ENCODE measurements at regions of chr11 and their contacts with region 1.

Region 1: DNA sequence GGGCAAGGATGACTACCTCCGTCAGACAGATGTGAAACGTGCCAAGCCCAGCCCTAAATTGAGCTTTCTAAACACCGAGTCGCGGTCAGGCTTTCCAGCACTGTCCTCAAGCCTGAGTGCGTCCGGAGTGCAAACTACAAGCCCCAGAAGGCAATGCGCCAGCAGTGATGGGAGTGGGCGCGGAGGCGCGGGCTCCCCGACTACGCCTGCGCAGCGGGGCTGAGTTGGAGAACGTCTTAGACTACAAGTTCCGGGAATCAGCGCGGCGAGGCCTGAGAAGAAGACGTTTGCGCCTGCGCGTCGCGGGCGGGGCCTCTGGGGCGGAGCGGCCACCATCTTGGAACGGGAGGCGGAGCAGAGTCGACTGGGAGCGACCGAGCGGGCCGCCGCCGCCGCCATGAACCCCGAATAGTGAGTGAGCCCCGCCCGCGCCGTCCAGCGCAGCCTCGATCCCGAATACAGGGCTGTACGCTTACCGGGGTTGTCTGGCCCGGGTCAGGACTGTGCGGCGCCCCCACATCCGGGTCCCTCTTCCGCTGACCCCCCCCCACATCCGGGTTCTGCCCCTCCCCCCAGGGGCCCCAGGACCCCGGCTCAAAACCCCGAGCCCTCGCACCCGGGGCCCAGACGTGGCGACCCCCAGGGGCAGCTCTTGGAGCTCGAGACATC is at the start of gene RAB1B:
- DNase-seq: peak; percentile 99
- ATAC-seq: peak; percentile 88
- H3K4me3 Mint-ChIP-seq: peak within 1 kb of the TSS; percentile 87
- H3K27ac Mint-ChIP-seq: peak within 1 kb of the TSS; percentile 95
- H3K4me1 Mint-ChIP-seq: peaks cover 39% of the 10 kb centered on the region
- H3K27me3 Mint-ChIP-seq: no peaks in the 10 kb centered on the region
- total RNA-seq, gene RAB1B: 136 to 145 TPM

Region 2: DNA sequence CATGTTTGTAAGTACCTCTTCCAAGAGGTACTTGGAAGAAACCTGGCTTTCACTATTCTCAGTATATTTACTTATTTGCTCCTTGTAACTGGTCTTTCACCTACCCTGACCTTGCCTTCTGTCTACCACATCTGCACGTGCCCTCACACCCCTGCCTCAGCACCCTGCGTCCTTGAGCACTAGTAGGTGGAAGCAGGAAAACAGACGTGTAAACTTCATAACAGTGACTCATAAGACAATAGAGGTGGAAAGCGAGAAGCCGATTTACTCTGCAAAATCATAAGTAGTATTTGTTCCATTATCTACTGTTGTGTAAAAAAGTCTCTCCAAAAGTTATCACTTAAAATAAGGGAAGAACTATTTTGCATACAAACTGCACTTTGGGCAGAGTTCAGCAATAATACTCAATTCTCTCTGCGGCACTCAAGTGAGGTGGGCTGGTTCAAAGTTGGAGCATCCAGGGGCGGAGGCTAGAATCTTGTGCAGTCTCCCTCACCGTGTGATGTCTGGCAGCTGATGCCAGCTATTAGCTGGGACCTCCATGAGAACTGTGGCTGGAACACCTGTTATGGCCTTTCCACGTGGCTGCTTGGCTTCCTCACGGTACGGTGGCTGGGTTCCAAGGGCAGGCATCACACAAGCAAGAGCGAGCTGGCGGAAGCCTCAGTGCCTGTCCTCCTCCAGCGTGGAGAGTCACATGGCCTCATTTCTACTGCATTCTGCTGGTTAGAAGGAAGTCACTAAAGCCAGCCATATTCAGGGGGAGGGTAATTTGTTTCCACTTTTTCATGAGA is 167.9 kb before region 1 on chr11:
- POLR2A ChIA-PET with region 1: no interaction called
- DNase-seq: peak; percentile 71
- ATAC-seq: peak; percentile 97
- H3K4me3 Mint-ChIP-seq: peak overlapping the region; percentile 76
- H3K27ac Mint-ChIP-seq: peak overlapping the region; percentile 86
- H3K4me1 Mint-ChIP-seq: peaks cover 41% of the 10 kb centered on the region
- H3K27me3 Mint-ChIP-seq: no peaks in the 10 kb centered on the region

Region 3: GRCh38 chr11:66282468-66283386 is 14.3 kb after region 1 on chr11:
- POLR2A ChIA-PET with region 1: interaction called, 20 read pairs
- DNase-seq: peak; percentile 100
- ATAC-seq: peak; percentile 91
- H3K4me3 Mint-ChIP-seq: no peak overlapping the region
- H3K27ac Mint-ChIP-seq: peak overlapping the region; percentile 63
- H3K4me1 Mint-ChIP-seq: peaks cover 20% of the 10 kb centered on the region
- H3K27me3 Mint-ChIP-seq: peaks cover 14% of the 10 kb centered on the region

Region 4: DNA sequence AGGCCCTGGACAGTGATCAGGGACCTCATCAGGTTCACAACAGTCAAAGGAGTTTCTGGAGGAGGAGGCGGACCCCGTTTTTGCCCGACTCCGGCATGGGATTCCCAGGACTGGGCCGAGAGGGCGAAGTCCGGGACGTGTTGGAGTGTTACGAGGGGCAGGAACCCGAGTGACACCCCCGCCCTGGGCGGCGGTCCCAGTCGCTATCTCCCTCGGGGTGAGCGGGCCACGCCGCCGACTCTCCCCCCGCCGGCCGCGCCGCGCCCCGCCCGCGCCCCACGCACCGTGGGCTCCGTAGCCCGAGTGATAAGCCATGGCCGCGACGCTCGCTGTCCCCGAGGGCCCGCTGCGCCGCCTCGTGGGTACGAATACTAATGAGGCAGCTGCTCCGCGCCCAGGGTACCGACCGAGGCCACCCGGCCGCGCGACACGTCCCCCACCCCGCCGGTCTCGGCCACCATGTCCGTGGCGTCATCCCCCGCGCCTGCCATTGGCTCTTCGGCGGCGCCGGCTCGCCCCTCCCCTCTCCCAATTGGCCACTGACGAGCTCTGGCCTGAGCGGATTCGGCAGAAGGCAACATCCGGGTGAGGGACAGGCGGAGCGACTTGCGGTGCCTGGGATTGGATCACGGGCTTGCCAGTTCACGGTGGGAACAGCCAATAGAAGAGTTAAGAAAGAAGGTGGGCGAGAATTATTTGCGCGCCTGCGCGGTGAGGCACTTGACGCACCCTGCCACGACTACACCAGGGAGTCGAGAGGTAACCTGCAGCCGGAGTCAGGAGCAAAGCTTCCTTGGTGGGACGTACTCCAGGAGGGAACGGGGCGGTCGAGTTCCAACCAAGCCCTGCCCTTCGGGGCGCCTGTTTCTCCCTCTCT is 20.5 kb after region 1 on chr11 and contains the start of gene YIF1A:
- POLR2A ChIA-PET with region 1: interaction called, 14 read pairs
- DNase-seq: peak; percentile 96
- ATAC-seq: peak; percentile 97
- H3K4me3 Mint-ChIP-seq: peak within 1 kb of the TSS; percentile 93
- H3K27ac Mint-ChIP-seq: peak within 1 kb of the TSS; percentile 90
- H3K4me1 Mint-ChIP-seq: peaks cover 27% of the 10 kb centered on the region
- H3K27me3 Mint-ChIP-seq: peaks cover 29% of the 10 kb centered on the region
- total RNA-seq, gene YIF1A: 44.5 to 45.5 TPM

Measured in activated naive CD8-positive, alpha-beta T cell treated with anti-CD3 and anti-CD28 coated beads, Interleukin-2, amount 10 ng/mL, durations not matched to agents 7 days and 5 days (primary cell).